MCF 10A (cell line): ENCODE measurements at regions of chr21 and their contacts with region 1.

Region 1: DNA sequence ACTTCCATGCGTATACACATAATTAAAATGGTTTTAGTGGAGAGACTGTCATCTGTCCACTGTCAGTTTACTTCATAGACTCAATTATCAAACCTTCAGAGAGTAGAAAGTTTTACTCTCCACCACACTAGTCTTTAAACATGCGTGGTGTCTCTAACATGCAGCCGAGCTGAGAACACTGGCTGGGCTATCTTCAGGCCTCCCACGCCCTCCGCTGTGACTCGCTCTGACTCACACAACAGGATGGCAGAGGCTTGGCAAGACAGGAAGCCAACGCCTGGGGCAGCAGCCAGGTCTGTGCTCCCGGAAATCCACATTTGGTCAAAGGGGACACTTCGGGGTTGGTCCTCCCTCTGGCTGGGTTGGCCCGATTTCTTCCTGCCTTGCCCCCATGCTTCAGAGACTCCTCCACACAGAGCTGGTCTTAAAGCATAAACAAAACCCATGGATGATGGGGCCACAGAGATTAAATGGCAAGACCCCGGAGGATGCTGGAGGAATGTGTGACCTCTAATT is 22.7 kb upstream of the IFNGR2 start:
- DNase-seq: peak; percentile 99
- H3K4me3 Mint-ChIP-seq: peak overlapping the region; percentile 38
- H3K27ac Mint-ChIP-seq: peak overlapping the region; percentile 88
- H3K4me1 Mint-ChIP-seq: peaks cover 42% of the 10 kb centered on the region
- H3K27me3 Mint-ChIP-seq: no peaks in the 10 kb centered on the region
- CTCF ChIP-seq: no peak

Region 2: DNA sequence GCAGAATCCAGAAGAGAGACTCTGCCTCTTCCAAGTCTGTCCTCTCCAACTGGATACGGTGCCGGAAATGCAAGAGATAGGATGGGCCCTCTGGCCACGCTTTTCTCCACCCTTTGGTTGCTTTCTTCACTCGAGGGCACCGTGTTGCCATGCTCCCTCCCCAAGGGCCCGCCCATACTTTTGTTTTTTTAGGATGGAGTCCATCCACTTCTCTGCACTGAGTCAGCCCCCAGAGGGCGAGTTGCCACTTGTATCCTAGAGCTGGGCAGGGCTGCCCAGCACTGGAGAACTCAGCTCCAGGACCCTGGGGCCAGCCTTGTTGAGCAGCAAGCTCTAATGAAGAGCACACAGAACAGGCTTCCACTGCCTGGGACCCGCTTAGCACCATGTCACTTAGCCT is 48.1 kb after region 1 on chr21:
- CTCF ChIA-PET with region 1: interaction called, 3 read pairs
- POLR2A ChIA-PET with region 1: interaction called, 35 read pairs
- intact Hi-C with region 1: loop called (anchors 1 kb)
- DNase-seq: peak; percentile 99
- H3K4me3 Mint-ChIP-seq: peak overlapping the region; percentile 60
- H3K27ac Mint-ChIP-seq: peak overlapping the region; percentile 93
- H3K4me1 Mint-ChIP-seq: peaks cover 17% of the 10 kb centered on the region
- H3K27me3 Mint-ChIP-seq: no peaks in the 10 kb centered on the region
- CTCF ChIP-seq: no peak

Region 3: GRCh38 chr21:33434770-33435360 is 54.3 kb after region 1 on chr21:
- CTCF ChIA-PET with region 1: interaction called, 3 read pairs
- POLR2A ChIA-PET with region 1: interaction called, 35 read pairs
- intact Hi-C with region 1: loop called (anchors 5 kb)
- DNase-seq: peak; percentile 94
- H3K4me3 Mint-ChIP-seq: peak overlapping the region; percentile 61
- H3K27ac Mint-ChIP-seq: peak overlapping the region; percentile 95
- H3K4me1 Mint-ChIP-seq: peaks cover 21% of the 10 kb centered on the region
- H3K27me3 Mint-ChIP-seq: no peaks in the 10 kb centered on the region
- CTCF ChIP-seq: no peak

Region 4: GRCh38 chr21:33703750-33704606 is 323.4 kb after region 1 on chr21:
- CTCF ChIA-PET with region 1: no interaction called
- POLR2A ChIA-PET with region 1: no interaction called
- intact Hi-C with region 1: no loop called
- DNase-seq: no peak
- H3K4me3 Mint-ChIP-seq: no peak overlapping the region
- H3K27ac Mint-ChIP-seq: peak overlapping the region; percentile 1
- H3K4me1 Mint-ChIP-seq: no peaks in the 10 kb centered on the region
- H3K27me3 Mint-ChIP-seq: no peaks in the 10 kb centered on the region
- CTCF ChIP-seq: no peak